HEK293T (cell line): ENCODE measurements at regions of chr11 and their contacts with region 1.

Region 1: GRCh38 chr11:62753736-62754603 is at the start of gene ZBTB3:
- DNase-seq: peak; percentile 94

Region 2: DNA sequence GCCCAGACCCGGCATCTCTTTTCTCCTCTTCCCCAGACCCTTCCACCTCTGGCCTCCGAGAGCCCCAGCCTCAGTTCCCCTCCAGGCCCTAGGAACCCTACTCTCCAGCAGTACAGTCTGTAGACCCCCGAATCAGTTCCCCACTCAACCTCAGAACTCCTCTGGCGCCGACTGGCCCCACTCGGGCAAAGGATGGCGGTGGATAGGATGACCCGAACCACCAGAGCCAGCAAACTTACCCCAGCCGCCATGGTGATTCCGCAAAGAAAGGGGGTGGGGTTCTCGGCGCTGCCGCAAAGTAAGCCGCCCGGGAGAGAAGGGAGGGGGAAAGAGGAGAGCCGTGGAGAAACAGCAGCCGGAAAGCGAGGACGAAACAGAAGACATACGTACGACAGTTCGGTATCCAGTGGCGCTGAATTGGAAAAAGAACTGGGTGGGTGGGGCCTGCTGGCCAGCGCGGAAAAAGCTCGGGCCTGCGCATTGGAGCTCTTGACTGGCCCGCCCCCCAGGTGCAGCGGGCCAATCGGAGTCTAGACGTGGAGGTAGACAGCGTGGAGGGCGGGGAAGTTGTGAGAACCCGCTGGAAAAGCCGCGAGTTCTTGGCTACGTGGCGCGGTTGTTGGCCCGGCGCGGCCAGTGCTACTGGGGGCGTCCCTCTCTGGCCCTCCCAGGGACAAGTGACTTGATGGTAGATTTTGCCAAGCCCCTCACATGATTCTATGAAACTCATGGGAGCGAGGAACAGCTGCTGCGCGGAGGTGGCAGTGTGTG is 180.2 kb before region 1 on chr11 and contains the start of gene EEF1G:
- CTCF ChIA-PET with region 1: no interaction called
- POLR2A ChIA-PET with region 1: interaction called, 12 read pairs
- DNase-seq: peak; percentile 98

Region 3: DNA sequence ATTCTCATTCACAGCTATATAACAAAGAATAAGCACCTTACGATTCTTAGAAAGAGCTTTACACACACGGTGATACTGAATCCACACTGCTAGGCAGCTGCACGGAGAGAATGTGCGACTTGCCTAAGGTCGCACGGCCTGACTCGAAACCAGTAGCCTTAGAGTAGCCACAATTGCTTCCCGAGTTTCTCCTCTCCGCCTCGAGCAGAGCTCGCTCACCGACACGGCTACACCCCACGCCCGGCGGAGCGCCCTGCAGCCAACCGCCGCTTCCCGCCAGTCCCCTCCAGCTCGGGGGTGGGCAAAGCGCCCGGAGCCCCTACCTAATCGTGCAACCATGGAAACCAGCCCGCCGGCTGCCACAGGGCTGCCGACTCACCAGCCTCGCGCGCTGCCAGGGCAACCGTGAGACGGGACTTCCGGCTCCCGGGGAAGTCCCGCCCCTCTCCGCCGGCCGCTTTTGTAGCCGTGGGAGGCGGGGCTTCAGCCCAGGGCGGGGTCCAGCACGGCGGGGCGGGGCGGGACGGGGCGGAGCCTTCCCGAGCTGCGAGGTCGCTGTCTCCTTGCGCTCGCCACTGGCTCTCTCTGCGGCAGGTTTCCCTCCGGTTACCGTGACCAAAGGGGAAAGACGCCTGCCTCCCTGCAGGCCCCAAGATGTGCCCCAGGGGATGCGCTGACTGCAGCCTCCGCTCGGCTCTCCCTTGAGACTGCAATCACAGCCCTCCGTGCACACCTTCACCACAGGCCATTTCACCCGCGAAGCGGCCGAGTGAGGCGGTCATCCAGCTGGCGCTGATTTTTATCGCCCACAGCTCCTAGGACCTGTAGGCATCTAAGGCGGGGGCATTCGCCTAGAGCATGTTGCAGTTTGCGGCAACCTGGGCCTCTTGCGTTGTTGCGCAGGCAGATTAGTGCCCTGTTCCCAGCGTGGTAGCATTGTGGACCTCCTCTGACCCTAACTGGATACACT is 47.8 kb before region 1 on chr11:
- CTCF ChIA-PET with region 1: no interaction called
- POLR2A ChIA-PET with region 1: interaction called, 13 read pairs
- DNase-seq: peak; percentile 93

Region 4: GRCh38 chr11:62771144-62772021 is 17.4 kb after region 1 on chr11 and contains the start of gene TAF6L:
- CTCF ChIA-PET with region 1: interaction called, 7 read pairs
- POLR2A ChIA-PET with region 1: interaction called, 64 read pairs
- DNase-seq: peak; percentile 92

Region 5: DNA sequence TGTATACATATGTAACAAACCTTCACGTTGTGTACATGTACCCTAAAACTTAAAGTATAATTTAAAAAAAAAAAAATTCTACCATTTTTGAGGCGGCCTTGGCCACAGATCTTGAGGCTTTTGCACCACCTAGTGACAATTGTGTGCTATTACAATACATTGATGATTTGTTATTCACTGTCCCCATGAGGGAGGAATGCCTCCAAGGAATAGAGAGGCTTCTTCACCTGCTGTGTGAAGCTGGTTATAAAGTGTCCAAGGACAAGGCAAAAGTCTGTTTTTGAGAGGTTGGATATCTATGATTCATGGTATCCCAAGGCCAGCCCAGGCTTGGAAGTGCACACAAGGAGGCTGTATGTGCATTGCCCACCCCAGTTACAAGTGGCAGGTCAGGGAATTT is 458.8 kb after region 1 on chr11:
- CTCF ChIA-PET with region 1: no interaction called
- POLR2A ChIA-PET with region 1: no interaction called
- DNase-seq: peak; percentile 34